Prostate gland (tissue), 2 donors: ENCODE measurements at regions of chr15 and their contacts with region 1.

Region 1: DNA sequence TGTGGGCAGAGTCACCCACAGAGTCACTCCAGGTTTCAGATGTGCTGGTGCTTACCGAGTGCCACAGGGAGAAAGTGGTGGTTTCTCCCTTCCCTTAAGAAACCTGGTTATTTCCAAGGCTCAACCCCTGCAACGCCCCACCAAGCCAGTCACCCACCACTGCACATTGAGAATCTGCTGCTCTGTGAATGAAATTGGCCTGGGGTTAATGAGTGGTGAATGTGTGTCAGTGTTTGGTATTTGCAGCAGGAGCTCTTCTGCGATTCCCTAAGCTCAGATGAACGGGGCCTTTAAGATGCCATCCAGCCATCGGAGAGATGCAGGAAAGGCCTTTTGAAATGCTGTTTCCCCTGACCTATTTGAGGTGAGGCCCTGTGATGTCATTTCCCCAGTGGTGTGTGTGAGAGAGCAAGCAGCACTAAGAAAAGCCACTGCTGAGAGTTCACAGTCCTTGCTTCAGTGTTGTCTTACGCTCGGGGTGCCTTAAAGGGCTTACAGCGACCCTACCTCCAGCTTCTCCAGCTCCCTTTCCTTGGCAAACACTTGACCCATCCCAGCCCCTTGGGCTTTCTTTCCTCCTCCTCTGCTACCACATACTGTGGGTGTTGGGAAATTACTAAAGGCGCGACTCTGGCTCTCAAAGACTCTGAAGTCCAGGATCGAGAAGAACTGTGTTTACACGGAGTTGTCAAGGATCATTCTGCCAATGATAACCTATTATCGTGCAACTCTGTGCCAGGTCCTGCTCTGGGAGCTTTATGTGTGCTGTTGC is 68.9 kb downstream of the SMAD3 start:
- DNase-seq: no peak
- H3K4me3 ChIP-seq: no peak overlapping the region
- H3K27ac ChIP-seq: peak overlapping the region; percentile 82 to 83
- H3K4me1 ChIP-seq: peaks cover 37% of the 10 kb centered on the region
- H3K27me3 ChIP-seq: no peaks in the 10 kb centered on the region
- CTCF ChIP-seq: no peak
- POLR2A ChIP-seq: no peak

Region 2: GRCh38 chr15:67091071-67091979 is 42.9 kb before region 1 on chr15:
- intact Hi-C with region 1: no loop called
- DNase-seq: no peak
- H3K4me3 ChIP-seq: no peak overlapping the region
- H3K27ac ChIP-seq: peak overlapping the region in 1 of 2 donors; percentile 30
- H3K4me1 ChIP-seq: peaks cover 6% of the 10 kb centered on the region
- H3K27me3 ChIP-seq: no peaks in the 10 kb centered on the region
- CTCF ChIP-seq: no peak
- POLR2A ChIP-seq: no peak

Region 3: DNA sequence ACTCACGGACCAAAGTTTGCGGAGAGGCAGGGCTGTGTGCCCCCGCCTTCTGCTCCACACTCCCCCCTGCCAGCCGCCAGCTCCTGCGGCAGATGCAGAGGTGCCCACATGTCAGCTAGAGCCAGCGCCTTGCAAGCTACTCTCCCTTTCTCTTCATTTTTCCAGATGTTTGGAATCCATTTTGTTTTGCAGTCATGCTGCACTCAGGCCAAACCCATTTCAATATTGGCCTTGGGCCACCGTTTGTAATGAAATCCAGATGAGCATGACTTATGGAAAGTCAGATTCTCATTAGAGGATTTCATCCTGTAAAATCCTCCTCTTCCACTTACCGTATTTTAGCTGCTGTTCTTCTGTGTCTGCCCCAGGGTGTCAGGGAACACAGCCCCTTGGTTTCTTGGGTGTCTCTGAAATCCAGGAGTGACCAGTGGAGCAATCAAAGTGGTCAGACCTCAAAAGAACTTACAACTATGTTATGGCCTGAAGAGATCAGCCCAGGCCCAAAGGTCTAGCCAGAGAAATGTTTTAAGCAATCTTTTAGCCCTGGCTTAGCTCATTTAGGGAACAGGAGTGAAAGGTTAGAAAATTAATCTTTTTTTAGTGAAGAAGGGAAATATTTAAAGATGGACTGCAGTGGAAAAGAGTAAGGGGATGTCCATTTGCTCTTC is 54.4 kb after region 1 on chr15:
- intact Hi-C with region 1: loop called (anchors 5 kb)
- DNase-seq: no peak
- H3K4me3 ChIP-seq: no peak overlapping the region
- H3K27ac ChIP-seq: peak overlapping the region; percentile 51 to 54
- H3K4me1 ChIP-seq: peaks cover 25% of the 10 kb centered on the region
- H3K27me3 ChIP-seq: no peaks in the 10 kb centered on the region
- CTCF ChIP-seq: no peak
- POLR2A ChIP-seq: no peak

Region 4: DNA sequence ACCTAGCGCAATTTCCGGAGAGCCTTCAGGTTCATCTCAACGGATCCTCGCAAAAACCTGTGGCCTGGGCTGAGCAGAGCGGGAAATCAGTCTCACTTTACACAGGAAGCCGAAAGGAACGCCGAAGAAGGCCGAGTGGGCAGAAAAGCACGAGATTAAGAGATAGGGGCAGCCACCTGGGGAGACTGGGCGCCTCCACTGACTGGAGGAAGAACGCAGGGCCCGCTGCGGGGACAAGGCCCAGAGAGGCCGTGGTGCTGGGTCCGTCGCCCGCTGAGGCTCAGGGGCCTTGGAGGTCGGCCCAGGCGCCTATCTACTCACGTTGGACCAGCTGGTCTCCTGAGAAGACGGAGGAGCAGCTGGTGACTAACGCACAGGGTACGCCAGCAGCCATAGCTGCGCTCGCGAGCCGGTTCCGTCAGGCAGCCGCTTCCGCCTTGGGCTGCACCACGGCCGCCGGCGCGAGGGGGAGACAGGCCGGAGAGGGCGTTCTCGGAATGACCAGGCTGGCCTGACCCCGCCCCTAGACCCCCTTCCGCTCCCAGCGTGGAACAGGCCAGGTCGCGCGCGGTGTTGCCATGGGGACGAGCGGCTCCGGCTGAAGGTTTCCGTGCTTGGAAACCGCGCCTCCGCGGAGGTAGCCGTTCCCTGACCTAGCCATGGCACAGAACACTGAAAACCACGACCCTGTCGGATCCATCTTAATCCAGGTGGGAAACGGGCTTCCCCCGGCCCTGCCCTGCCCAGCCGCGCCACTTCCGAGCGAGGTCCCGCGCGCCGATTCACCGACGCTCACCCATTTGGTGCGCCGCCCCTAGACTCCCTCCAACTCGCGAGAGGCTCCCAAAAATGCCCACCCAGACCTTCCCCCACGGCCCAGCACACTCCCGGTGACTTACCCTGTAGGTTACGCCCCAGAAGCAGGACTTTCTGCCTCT is 120.3 kb after region 1 on chr15 and contains the starts of genes AAGAB and IQCH:
- intact Hi-C with region 1: loop called (anchors 10 kb)
- DNase-seq: peak; percentile 95
- H3K4me3 ChIP-seq: peak within 1 kb of the TSS; percentile 72 to 77
- H3K27ac ChIP-seq: peak within 1 kb of the TSS; percentile 73 to 78
- H3K4me1 ChIP-seq: no peaks in the 10 kb centered on the region
- H3K27me3 ChIP-seq: no peaks in the 10 kb centered on the region
- CTCF ChIP-seq: peak in 2 of 4 experiments; percentile 16 to 34
- POLR2A ChIP-seq: peak; percentile 61
- total RNA-seq, gene AAGAB: 34.1 to 34.3 TPM
- total RNA-seq, gene IQCH: 5.8 to 9.5 TPM